Aorta (tissue), 5 donors: ENCODE measurements at regions of chr15 and their contacts with region 1.

Region 1: DNA sequence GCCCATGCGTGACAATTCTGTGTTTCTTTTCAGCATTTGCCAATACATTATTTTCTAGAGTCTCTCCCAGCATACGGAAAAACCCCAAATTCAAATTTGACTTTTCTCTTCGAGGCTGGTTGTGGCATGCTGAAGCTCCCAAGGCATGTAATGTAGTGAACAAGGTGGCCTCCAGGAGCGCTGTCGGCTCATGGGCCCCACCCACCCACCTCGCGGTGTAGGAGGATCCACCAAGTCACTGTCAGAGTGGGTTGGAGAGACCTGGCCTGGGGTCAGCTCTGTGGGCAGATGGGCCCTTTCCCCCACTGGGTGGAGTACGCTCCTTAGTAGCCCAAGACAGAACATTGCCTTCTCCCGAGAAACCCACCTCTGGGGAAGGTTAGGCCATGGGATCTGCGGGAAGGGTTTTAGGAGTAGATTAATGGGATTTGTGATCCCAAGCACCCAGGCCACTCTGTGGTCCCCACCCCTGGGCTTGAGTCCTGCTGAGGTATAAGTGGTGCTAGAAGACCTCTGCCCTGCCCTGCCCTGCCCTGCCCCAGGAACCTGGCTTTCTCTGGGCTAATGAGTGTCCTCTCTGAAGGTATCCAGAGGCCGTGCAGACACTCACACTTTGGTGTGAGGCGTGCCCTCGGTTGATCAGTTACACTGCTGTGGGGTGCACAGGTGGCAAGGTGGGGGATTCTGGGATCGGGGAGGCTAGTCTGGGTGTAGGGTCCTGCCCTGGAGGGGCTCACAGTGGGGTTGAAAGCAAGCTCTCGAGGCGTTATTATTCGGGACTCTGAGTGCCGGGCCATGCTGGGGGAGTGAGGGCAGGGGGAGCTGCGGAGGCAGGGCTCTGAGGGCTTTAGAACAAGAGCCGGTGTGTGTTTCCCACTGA is 97.9 kb downstream of the APBA2 start:
- DNase-seq: no peak
- ATAC-seq: no peak
- H3K4me3 ChIP-seq: no peak overlapping the region
- H3K27ac ChIP-seq: no peak overlapping the region
- H3K4me1 ChIP-seq: no peaks in the 10 kb centered on the region
- H3K27me3 ChIP-seq: no peaks in the 10 kb centered on the region

Region 2: DNA sequence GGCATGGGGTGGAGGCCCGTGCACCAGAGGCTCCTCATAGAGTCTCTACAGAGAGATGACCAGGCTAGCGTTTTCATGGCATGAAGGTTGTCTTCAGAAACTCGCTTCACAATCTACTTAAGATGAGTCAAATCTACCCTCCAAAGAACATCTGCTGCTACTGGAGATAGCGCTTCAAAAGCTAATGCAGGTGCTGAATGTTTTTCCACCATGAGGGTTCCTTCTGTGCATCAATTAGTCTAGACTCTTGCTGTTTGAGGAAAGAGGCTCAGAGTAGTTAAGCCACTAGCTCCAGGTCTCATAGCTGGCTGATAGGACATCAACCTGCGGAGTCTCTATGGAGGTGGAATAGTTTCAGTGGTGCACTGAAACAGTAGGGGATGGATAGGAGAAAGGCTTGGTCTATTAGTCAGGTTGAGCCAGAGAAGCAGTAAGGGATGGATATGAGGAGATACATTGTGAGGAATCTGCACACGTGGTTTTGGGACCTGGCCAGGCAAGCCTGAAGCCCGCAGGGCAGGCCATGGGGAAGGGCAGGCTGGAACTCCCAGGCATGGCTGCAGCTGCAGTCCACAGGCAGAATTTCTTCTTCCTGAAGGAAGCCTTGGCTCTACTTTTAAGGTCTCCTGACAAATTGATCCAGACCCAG is 19.6 kb after region 1 on chr15:
- intact Hi-C with region 1: loop called in 1 of 2 experiments (anchors 2 kb)
- DNase-seq: no peak
- ATAC-seq: no peak
- H3K4me3 ChIP-seq: no peak overlapping the region
- H3K27ac ChIP-seq: no peak overlapping the region
- H3K4me1 ChIP-seq: no peaks in the 10 kb centered on the region
- H3K27me3 ChIP-seq: no peaks in the 10 kb centered on the region